ENCODE measurements at regions of chr1 and their contacts with region 1.

Region 1: DNA sequence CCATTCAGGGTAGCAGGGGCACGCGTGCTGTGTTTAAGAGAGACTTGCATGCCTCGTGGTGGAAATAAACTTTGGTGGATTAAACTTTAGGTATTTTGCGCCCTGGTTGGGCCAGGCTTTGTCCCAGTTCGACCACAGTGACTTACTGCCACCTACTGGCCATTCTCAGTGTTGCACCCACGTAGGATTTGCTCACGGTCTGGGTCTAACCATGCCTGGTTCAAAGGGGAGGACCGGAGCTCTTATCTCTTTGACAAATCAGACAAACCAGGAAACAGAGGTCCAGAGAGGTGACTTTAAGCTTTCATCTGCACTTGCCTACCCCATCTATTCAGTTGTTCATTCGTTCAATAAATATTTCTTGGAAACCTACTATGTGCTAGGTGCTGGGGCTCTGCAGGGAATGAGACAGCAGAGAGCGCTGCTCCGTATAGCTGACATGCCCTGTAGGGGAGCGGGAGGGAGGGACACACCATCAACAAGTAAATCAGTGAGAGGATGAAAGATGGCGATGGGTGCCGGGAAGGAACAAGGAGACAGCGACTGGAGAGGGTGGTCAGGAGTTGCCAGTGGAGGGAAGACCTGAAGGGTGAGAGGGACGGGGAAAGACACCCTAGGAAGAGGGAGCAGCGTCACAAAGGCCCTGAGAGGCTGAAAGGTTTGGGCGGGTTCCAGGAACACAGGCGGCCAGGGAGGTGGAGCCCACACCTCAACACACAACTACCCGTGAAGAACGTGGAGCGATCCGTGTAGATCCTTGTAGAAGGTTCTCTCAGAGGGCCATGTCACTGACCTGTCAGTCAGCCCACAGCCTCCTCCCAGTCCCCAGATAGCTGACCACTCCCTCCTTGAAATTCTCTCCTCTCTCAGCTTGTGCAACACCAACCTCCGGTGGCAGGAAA is 27.2 kb upstream of the TINAGL1 start:
- DNase-seq: peak; percentile 95
- H3K4me3 Mint-ChIP-seq: peak overlapping the region; percentile 64
- H3K27ac Mint-ChIP-seq: no peak overlapping the region
- H3K4me1 Mint-ChIP-seq: peaks cover 9% of the 10 kb centered on the region
- H3K27me3 Mint-ChIP-seq: peaks cover 13% of the 10 kb centered on the region

Region 2: GRCh38 chr1:30379684-30380624 is 1169.2 kb before region 1 on chr1:
- CTCF ChIA-PET with region 1: no interaction called
- intact Hi-C with region 1: no loop called
- DNase-seq: peak; percentile 69
- H3K4me3 Mint-ChIP-seq: no peak overlapping the region
- H3K27ac Mint-ChIP-seq: no peak overlapping the region
- H3K4me1 Mint-ChIP-seq: no peaks in the 10 kb centered on the region
- H3K27me3 Mint-ChIP-seq: peaks cover 5% of the 10 kb centered on the region

Region 3: DNA sequence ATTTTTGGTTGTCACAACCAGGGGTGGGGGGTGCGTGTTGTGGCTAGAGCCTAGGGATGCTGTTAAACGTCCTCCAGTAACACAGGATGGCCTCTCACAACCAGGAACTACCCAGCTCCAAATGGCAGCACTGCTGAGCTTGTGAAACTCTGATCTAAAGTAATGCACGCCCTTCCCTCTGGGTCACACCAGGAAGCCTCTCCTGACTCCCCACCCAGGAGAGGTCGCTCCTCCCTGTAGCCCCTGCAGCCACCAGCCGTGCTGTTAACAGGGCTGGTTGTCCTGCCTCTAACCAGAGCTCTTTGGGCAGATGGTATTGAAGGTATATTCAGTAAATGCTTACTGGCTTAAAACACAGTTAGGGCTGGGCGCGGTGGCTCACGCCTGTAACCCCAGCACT is 382.7 kb before region 1 on chr1:
- CTCF ChIA-PET with region 1: interaction called, 9 read pairs
- intact Hi-C with region 1: loop called (anchors 1 kb)
- DNase-seq: no peak
- H3K4me3 Mint-ChIP-seq: no peak overlapping the region
- H3K27ac Mint-ChIP-seq: no peak overlapping the region
- H3K4me1 Mint-ChIP-seq: peaks cover 5% of the 10 kb centered on the region
- H3K27me3 Mint-ChIP-seq: peaks cover 2% of the 10 kb centered on the region

Region 4: DNA sequence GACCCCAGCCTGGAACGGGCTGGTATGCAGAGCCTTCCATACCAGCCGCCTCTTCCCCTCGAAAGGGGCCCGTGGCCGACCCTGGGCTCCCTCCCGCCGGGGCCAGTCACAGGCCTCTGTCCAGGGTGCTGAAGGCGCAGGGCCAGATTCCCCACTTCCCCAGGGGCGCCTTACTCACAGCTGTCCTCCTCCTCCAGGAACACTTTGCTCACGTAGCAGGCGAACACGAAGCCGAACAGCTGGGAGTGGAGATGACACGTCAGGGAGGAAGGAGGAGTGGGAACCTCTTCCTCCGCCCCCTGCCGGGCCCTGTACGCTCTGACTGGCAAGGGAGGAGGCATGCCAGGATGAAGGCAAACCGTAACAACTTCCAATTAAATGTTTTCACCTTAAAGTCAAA is 366.8 kb before region 1 on chr1:
- CTCF ChIA-PET with region 1: interaction called, 4 read pairs
- intact Hi-C with region 1: loop called (anchors 1 kb)
- DNase-seq: peak; percentile 66
- H3K4me3 Mint-ChIP-seq: no peak overlapping the region
- H3K27ac Mint-ChIP-seq: no peak overlapping the region
- H3K4me1 Mint-ChIP-seq: peaks cover 8% of the 10 kb centered on the region
- H3K27me3 Mint-ChIP-seq: peaks cover 37% of the 10 kb centered on the region

Region 5: DNA sequence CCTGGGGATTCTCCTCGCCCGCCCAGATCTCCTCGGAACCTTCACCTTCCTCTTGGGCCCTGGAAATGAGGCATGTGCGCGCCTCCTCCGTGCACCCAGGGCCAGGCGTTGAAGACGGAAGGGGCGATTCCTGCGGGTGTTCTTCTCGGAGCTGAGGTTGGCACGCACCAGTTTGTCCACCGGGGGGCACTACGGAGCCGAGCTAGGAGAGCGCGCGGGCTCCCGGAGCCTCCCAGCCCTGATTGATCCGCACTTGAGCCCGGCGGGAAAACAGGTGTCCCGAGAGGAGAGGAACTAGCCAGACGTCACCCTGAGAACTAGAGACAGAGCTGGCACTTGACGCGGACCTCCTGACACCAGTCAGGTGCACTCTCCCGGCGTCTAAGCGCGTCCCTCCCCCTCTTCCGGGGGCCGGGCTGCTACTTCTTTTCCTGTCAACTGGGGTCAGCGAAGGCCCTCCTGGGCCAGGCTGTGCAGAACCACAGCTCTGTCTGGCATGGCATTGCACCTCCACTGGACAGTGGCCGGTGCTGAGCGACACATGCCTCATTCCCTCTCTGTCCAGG is 154.4 kb before region 1 on chr1:
- CTCF ChIA-PET with region 1: interaction called, 24 read pairs
- intact Hi-C with region 1: loop called (anchors 1 kb)
- DNase-seq: peak; percentile 90
- H3K4me3 Mint-ChIP-seq: peak overlapping the region; percentile 72
- H3K27ac Mint-ChIP-seq: no peak overlapping the region
- H3K4me1 Mint-ChIP-seq: peaks cover 6% of the 10 kb centered on the region
- H3K27me3 Mint-ChIP-seq: no peaks in the 10 kb centered on the region

Region 6: DNA sequence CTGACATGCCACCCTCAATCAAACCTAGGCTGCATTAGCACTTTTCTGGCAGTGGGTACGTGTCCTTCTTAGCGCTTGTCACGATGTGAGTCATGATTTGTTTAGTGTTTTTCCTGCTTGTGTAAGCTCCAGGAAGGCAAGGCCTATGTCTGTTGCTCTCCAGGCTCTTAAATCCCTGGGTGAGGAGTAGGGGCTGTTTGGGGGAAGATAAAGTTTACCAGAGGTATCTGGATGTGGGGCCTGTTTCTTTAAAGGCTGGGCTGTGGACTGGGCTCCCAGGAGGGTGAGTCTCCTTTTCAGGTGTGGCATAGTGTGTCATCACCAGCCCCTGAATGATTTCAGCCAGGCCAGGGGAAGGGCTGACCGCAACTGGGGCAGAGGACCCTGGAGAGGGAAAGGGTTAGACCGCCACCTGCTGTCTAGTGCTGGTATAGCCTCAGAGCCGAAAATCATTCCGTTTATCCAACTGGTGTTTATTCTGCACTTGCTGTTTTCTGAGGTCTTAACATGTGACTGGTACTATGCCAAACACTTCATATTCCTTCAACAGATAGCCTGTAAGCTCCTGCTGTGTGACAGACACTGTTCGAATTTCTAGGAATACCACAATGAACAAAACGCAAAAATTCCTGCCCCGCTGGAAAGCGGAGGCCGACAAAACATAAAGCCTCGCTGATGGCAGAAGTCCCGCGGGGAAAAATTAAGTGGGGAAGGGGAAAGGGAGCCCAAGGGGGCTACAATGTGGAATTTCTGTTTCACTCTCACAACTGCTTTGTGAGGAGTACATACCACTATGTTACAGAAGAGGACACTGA is 126.4 kb before region 1 on chr1:
- CTCF ChIA-PET with region 1: interaction called, 10 read pairs
- intact Hi-C with region 1: loop called (anchors 1 kb)
- DNase-seq: peak; percentile 81
- H3K4me3 Mint-ChIP-seq: no peak overlapping the region
- H3K27ac Mint-ChIP-seq: no peak overlapping the region
- H3K4me1 Mint-ChIP-seq: peaks cover 2% of the 10 kb centered on the region
- H3K27me3 Mint-ChIP-seq: peaks cover 22% of the 10 kb centered on the region

Region 7: DNA sequence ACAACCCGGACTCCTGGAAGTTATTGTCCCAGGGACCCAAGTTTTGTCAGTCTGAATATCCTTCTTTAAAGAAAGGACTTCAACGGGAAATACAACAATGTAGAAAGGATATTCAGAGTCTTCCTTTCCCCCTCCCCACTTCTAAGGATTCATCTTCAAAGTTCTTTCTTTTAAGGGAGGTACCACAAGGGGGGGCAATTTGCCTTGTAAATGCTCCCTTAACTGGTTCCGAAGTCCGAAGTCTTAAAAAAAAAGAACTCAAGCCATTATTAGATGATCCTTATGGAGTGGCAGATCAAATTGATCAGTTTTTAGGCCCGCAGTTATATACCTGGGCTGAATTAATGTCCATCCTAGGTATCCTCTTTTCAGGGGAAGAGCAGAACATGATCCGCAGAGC is 89.1 kb before region 1 on chr1:
- CTCF ChIA-PET with region 1: no interaction called
- intact Hi-C with region 1: loop called (anchors 10 kb)
- DNase-seq: no peak
- H3K4me3 Mint-ChIP-seq: no peak overlapping the region
- H3K27ac Mint-ChIP-seq: no peak overlapping the region
- H3K4me1 Mint-ChIP-seq: no peaks in the 10 kb centered on the region
- H3K27me3 Mint-ChIP-seq: peaks cover 12% of the 10 kb centered on the region

Region 8: GRCh38 chr1:31535561-31535960 is 13.6 kb before region 1 on chr1:
- CTCF ChIA-PET with region 1: interaction called, 28 read pairs
- intact Hi-C with region 1: no loop called
- DNase-seq: no peak
- H3K4me3 Mint-ChIP-seq: no peak overlapping the region
- H3K27ac Mint-ChIP-seq: no peak overlapping the region
- H3K4me1 Mint-ChIP-seq: peaks cover 4% of the 10 kb centered on the region
- H3K27me3 Mint-ChIP-seq: peaks cover 13% of the 10 kb centered on the region